ENCODE measurements at regions of chr5 and their contacts with region 1.

Region 1: GRCh38 chr5:74640450-74640953 is at the start of gene ENC1:
- DNase-seq: peak; percentile 86 to 93 (median 91)
- ATAC-seq: peak; percentile 85
- H3K4me3 ChIP-seq: peak within 1 kb of the TSS; percentile 45
- H3K4me1 ChIP-seq: peaks cover 11% of the 10 kb centered on the region
- CTCF ChIP-seq: no peak
- total RNA-seq, gene ENC1: 14.6 to 23.3 (median 18.9) TPM

Region 2: GRCh38 chr5:73902327-73903051 is 738.0 kb before region 1 on chr5:
- intact Hi-C with region 1: loop called (anchors 2 to 5 kb)
- DNase-seq: peak in 1 of 3 donors; percentile 11
- ATAC-seq: peak; percentile 71
- H3K4me3 ChIP-seq: no peak overlapping the region
- H3K4me1 ChIP-seq: no peaks in the 10 kb centered on the region
- CTCF ChIP-seq: peak; percentile 69

Region 3: DNA sequence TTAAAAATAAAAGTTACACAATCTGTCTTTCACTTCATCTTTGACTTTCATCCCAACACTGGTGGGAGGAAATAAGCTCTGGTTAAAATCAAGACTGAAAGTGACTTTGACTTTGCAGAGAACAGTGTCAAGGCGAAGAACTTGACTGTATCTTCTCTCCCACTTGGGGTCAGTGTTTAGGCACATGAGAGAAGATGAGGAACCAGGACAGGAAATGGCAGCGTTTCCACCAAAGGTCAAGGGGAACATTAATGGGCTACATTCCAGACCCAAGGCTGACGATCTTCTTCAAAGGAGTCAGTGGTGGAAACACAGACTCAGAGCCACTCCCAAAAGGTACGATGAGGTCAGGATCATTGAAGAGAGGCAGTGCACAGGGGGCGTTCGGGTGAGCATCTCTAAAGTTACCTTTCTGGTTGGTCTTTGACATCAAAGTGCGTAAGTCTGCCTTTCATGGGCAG is 605.0 kb before region 1 on chr5:
- intact Hi-C with region 1: loop called in 1 of 2 experiments (anchors 10 kb)
- DNase-seq: peak in 1 of 3 donors; percentile 22
- ATAC-seq: peak; percentile 65
- H3K4me3 ChIP-seq: no peak overlapping the region
- H3K4me1 ChIP-seq: no peaks in the 10 kb centered on the region
- CTCF ChIP-seq: peak; percentile 12

Region 4: GRCh38 chr5:74684900-74685851 is 44.7 kb after region 1 on chr5 and contains the start of gene HEXB:
- intact Hi-C with region 1: no loop called
- DNase-seq: peak; percentile 95 to 96 (median 95)
- ATAC-seq: peak; percentile 98
- H3K4me3 ChIP-seq: peak within 1 kb of the TSS; percentile 78
- H3K4me1 ChIP-seq: peaks cover 15% of the 10 kb centered on the region
- CTCF ChIP-seq: no peak
- total RNA-seq, gene HEXB: 132 to 169 (median 148) TPM

Region 5: GRCh38 chr5:74810915-74811314 is 170.4 kb after region 1 on chr5:
- intact Hi-C with region 1: no loop called
- DNase-seq: no peak
- ATAC-seq: no peak
- H3K4me3 ChIP-seq: no peak overlapping the region
- H3K4me1 ChIP-seq: no peaks in the 10 kb centered on the region
- CTCF ChIP-seq: no peak